GM10248 (cell line): ENCODE measurements at regions of chr1 and their contacts with region 1.

Region 1: GRCh38 chr1:221708987-221709386 is 32.9 kb downstream of the DUSP10 start:
- DNase-seq: peak; percentile 46
- CTCF ChIP-seq: no peak

Region 2: DNA sequence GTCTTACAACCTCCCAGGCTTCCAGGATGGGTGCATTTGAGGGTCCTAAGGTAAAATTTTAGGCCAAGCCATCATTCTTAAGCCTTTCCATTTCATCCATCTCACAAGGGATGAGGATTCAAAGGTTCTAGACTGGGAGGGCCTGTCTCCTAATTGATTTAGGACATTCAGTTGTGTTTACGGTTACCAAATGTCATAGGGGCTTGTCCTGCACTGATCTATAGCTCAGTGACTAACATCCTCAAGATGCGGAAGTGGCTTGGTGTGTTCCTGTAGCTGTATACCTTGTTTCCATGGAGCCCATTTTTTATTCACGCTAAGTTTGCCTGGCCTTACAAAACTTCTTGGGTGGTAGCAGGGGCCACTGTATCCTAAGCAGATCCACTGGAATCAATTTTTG is 19.8 kb before region 1 on chr1:
- CTCF ChIA-PET with region 1: interaction called, 15 read pairs
- POLR2A ChIA-PET with region 1: no interaction called
- DNase-seq: no peak
- CTCF ChIP-seq: no peak

Region 3: GRCh38 chr1:221725735-221726672 is 17.0 kb after region 1 on chr1:
- CTCF ChIA-PET with region 1: interaction called, 93 read pairs
- POLR2A ChIA-PET with region 1: interaction called, 11 read pairs
- DNase-seq: peak; percentile 27
- CTCF ChIP-seq: no peak

Region 4: GRCh38 chr1:221741711-221742554 is 32.9 kb after region 1 on chr1 and contains the start of gene DUSP10:
- CTCF ChIA-PET with region 1: interaction called, 5 read pairs
- POLR2A ChIA-PET with region 1: interaction called, 27 read pairs
- DNase-seq: peak; percentile 99
- CTCF ChIP-seq: peak; percentile 2

Region 5: GRCh38 chr1:221816899-221817298 is 107.9 kb after region 1 on chr1:
- CTCF ChIA-PET with region 1: no interaction called
- POLR2A ChIA-PET with region 1: interaction called, 11 read pairs
- DNase-seq: no peak
- CTCF ChIP-seq: no peak